ENCODE measurements at regions of chr10 and their contacts with region 1.

Region 1: GRCh38 chr10:88582806-88583583 is at the start of gene RNLS:
- DNase-seq: peak; percentile 33 to 82
- H3K4me3 ChIP-seq: peak within 1 kb of the TSS; percentile 79 to 86 (median 83)
- H3K27ac ChIP-seq: peak within 1 kb of the TSS; percentile 85
- H3K4me1 ChIP-seq: no peaks in the 10 kb centered on the region
- H3K27me3 ChIP-seq: no peaks in the 10 kb centered on the region
- CTCF ChIP-seq: peak; percentile 64 to 76 (median 72)
- EP300 ChIP-seq: no peak
- POLR2A ChIP-seq: peak; percentile 54 to 80
- RAD21 ChIP-seq: peak; percentile 35 to 56; a peak in 3 of 4 replicates
- total RNA-seq, gene RNLS: 7.5 TPM in 2 replicates

Region 2: DNA sequence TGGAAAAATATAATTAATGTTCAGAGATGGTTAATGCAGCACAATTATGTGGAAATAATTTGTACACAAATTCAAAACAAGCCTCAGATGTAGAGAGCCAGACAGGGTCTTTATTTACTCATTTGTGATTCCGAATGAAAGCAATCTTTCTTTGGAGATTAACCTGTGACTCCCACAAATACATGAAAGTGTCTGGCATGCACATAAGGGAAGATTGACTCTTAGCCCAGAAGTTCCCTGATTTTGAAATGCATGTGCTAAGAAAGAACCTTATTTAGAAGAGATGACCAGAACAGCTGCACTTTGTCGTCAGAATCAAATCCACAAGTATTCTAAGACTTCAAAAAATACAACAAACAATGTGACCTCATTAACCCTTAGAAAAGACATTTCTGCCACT is 45.0 kb before region 1 on chr10:
- CTCF ChIA-PET with region 1: no interaction called
- POLR2A ChIA-PET with region 1: no interaction called
- DNase-seq: no peak
- H3K4me3 ChIP-seq: no peak overlapping the region
- H3K27ac ChIP-seq: no peak overlapping the region
- H3K4me1 ChIP-seq: no peaks in the 10 kb centered on the region
- H3K27me3 ChIP-seq: no peaks in the 10 kb centered on the region
- CTCF ChIP-seq: no peak
- EP300 ChIP-seq: no peak
- POLR2A ChIP-seq: no peak
- RAD21 ChIP-seq: no peak

Region 3: DNA sequence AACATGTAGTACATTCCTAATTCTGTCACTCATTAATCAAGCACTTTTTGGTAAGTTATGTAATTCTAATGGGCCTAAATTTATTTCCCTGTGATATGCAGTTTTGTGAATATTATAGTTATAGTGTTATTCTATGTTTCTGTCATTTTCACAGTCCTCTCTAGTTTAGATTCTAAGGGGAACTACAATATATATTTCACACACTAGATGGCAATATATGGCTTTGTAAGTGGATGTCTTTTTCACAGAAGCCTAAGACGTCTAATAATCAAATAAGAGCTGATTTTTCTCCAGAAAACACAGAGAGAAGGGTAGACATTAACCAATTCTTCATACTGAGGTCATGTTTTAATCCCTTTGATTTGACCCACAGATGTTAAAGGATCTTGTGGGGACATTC is 17.9 kb before region 1 on chr10:
- CTCF ChIA-PET with region 1: interaction called, 37 read pairs
- POLR2A ChIA-PET with region 1: no interaction called
- DNase-seq: no peak
- H3K4me3 ChIP-seq: no peak overlapping the region
- H3K27ac ChIP-seq: no peak overlapping the region
- H3K4me1 ChIP-seq: no peaks in the 10 kb centered on the region
- H3K27me3 ChIP-seq: no peaks in the 10 kb centered on the region
- CTCF ChIP-seq: peak in 1 of 3 experiments; percentile 19; a peak in 2 of 4 replicates
- EP300 ChIP-seq: no peak
- POLR2A ChIP-seq: no peak
- RAD21 ChIP-seq: peak in 1 of 2 experiments; percentile 49; a peak in 3 of 4 replicates

Region 4: GRCh38 chr10:88616251-88616977 is 33.4 kb after region 1 on chr10:
- CTCF ChIA-PET with region 1: interaction called, 11 read pairs
- POLR2A ChIA-PET with region 1: interaction called, 3 read pairs
- DNase-seq: no peak
- H3K4me3 ChIP-seq: no peak overlapping the region
- H3K27ac ChIP-seq: no peak overlapping the region
- H3K4me1 ChIP-seq: no peaks in the 10 kb centered on the region
- H3K27me3 ChIP-seq: no peaks in the 10 kb centered on the region
- CTCF ChIP-seq: no peak
- EP300 ChIP-seq: no peak
- POLR2A ChIP-seq: no peak
- RAD21 ChIP-seq: no peak